ENCODE measurements at regions of chr2 and their contacts with region 1.

Region 1: GRCh38 chr2:10832203-10832936 is 19.8 kb upstream of the PDIA6 start:
- DNase-seq: no peak
- H3K4me3 ChIP-seq: no peak overlapping the region
- H3K27me3 ChIP-seq: peaks cover 17% of the 10 kb centered on the region
- CTCF ChIP-seq: peak; percentile 98

Region 2: DNA sequence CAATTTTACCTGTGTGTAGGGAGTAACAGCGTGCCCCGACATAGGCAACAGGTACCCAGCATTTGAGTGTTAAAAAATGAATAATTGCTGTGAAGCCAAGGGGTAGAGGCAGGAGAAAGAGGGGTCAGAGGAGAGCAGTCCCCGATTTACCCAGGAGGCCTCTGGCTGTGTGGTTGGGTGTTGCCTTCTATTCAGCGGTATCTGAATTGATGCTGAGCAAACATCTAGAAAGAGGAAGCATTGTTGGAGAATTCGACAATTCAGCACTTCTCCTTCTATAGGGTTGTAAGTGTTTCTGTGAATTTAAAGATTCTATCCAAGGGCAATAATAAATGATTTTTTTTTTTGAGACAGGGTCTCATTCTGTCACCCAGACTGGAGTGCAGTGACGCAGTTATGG is 11.1 kb before region 1 on chr2:
- CTCF ChIA-PET with region 1: interaction called, 44 read pairs
- POLR2A ChIA-PET with region 1: no interaction called
- DNase-seq: no peak
- H3K4me3 ChIP-seq: no peak overlapping the region
- H3K27me3 ChIP-seq: peaks cover 23% of the 10 kb centered on the region
- CTCF ChIP-seq: no peak

Region 3: DNA sequence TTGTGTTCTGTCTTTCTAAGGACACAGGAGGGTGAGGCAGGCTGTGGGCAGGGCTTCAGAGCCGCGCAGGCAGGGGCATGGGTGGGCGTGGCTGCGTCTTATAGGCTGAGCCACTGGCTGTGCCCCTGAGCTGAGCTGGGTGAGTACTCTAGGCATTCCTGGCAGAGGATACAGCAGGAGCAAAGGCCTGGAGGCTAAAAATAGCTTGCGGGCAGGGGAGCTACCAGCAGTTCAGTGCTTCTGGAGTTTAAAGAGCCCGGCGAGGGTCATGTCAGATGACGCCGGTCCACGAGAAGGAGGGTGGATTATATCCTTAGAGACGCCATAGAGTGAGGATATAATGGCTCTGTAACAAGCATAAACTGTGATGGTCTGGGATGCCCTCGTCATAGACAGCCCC is 11.7 kb after region 1 on chr2:
- CTCF ChIA-PET with region 1: interaction called, 27 read pairs
- POLR2A ChIA-PET with region 1: no interaction called
- DNase-seq: no peak
- H3K4me3 ChIP-seq: no peak overlapping the region
- H3K27me3 ChIP-seq: peaks cover 3% of the 10 kb centered on the region
- CTCF ChIP-seq: no peak

Measured in BJ (cell line).